Left cardiac atrium (tissue), 4 donors: ENCODE measurements at regions of chr14 and their contacts with region 1.

Region 1: GRCh38 chr14:103808403-103809001 is 38.9 kb downstream of the PPP1R13B start:
- DNase-seq: peak; percentile 81
- ATAC-seq: peak; percentile 79 to 86

Region 2: GRCh38 chr14:103847451-103848188 is 39.1 kb after region 1 on chr14 and contains the start of gene PPP1R13B:
- intact Hi-C with region 1: loop called in 1 of 2 experiments (anchors 5 kb)
- DNase-seq: peak; percentile 96
- ATAC-seq: peak; percentile 97 to 98
- total RNA-seq, gene PPP1R13B: 63.0 to 89.3 TPM

Region 3: GRCh38 chr14:103880348-103881267 is 72.1 kb after region 1 on chr14:
- intact Hi-C with region 1: loop called in 1 of 2 experiments (anchors 5 kb)
- DNase-seq: peak; percentile 87
- ATAC-seq: peak; percentile 65 to 81

Region 4: GRCh38 chr14:103910262-103910935 is 101.9 kb after region 1 on chr14:
- intact Hi-C with region 1: loop called (anchors 5 kb)
- DNase-seq: peak; percentile 84
- ATAC-seq: peak; percentile 95 to 97

Region 5: GRCh38 chr14:103984196-103984595 is 175.7 kb after region 1 on chr14:
- intact Hi-C with region 1: loop called in 1 of 2 experiments (anchors 5 kb)
- DNase-seq: no peak
- ATAC-seq: no peak